ENCODE measurements at regions of chr3 and their contacts with region 1.

Region 1: GRCh38 chr3:112390783-112391641 is 58.1 kb downstream of the CD200 start:
- DNase-seq: peak; percentile 92
- H3K4me3 ChIP-seq: no peak overlapping the region
- CTCF ChIP-seq: no peak

Region 2: DNA sequence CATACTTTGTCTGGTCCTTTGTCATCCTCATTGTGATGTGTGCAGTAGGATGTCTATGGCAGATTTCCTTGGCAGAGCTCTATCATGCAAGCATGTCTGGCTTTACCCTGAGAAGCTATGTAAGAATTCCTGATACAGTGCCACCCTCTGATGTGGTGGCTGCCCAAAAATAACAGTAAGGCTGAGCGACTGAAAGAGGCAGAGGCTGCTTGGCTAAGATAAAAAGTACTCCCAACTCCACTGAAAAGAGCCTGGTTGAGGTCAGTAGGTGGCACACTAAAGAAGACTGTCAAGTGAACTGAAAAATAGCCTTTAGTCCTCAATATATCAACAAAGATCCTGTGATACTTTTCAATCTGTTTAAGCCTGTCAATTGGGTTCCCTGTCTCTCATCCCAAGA is 76.5 kb after region 1 on chr3:
- in situ Hi-C with region 1: loop called (anchors 5 kb)
- DNase-seq: no peak
- H3K4me3 ChIP-seq: no peak overlapping the region
- CTCF ChIP-seq: no peak

Measured in astrocyte of the cerebellum (primary cell).